ENCODE measurements at regions of chr6 and their contacts with region 1.

Region 1: GRCh38 chr6:35857853-35858252 is 52.7 kb downstream of the LHFPL5 start:
- DNase-seq: no peak
- H3K4me3 ChIP-seq: no peak overlapping the region
- H3K27ac ChIP-seq: no peak overlapping the region
- H3K4me1 ChIP-seq: no peaks in the 10 kb centered on the region
- H3K27me3 ChIP-seq: no peaks in the 10 kb centered on the region
- CTCF ChIP-seq: no peak

Region 2: DNA sequence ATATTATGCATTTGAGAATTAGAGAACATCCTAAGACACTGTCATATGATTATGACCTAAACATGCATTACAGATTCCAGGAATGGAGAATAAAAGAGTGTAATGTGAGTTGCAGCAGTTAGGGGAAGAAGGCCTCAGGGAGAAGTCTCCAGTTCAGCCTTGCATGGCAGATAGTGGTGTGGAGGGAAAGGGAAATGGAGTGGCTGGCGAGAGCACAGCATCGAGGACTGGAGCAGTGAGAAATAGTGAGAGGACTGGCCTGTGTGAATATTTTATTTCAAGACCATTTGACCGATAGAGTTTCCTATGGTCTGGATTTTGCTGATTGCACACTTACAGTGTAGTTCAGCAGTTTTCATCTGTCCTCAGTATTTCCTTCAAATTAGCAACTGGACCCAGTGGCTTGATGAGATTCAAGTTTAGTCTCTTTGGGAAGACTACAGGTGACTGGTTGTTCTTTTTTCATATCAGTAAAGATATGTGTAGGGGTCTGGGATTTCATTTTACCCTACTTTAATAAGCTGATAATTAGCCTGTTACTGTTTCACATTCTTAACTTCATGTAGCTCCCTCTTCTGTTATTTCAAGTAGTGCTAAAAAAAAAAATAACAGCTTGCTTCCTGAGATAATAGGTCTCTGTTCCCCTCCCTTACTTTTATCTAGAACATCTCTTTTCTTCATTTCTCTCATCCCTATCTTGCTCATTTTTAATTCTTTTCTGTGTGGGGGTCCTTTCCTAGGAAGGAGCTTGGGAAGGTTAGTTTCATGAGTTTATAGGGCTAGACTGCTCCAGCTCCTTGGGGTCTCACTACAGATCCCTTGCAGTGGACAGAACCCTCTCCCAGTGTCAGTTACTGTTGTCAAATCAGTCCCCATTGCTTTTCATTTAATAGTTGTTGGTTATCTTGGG is 1038.0 kb before region 1 on chr6:
- CTCF ChIA-PET with region 1: no interaction called
- dilution Hi-C with region 1: no loop called
- in situ Hi-C with region 1: no loop called
- intact Hi-C with region 1: no loop called
- DNase-seq: no peak
- H3K4me3 ChIP-seq: no peak overlapping the region
- H3K27ac ChIP-seq: no peak overlapping the region
- H3K4me1 ChIP-seq: no peaks in the 10 kb centered on the region
- H3K27me3 ChIP-seq: no peaks in the 10 kb centered on the region
- CTCF ChIP-seq: no peak

Region 3: DNA sequence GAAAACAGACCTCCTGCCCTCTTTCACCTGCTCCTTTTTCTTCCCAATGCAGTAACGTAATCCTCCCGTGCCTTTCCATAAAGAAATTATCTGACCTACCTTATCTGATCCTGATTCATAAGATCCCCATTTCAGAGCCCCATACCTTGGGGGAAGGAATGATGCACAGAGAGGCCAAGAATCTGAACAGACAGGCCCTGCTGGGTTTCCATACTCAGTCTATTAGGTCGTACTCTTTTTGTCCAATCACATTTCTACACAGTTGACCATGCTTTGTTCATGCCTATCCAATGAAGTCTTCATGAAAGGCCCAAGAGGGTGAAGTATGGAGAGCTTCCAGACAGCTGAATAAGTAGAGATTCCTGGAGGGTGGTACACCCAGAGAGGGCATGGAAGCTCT is 37.7 kb after region 1 on chr6:
- CTCF ChIA-PET with region 1: no interaction called
- dilution Hi-C with region 1: loop called (anchors 5 kb)
- in situ Hi-C with region 1: no loop called
- intact Hi-C with region 1: no loop called
- DNase-seq: peak; percentile 49
- H3K4me3 ChIP-seq: no peak overlapping the region
- H3K27ac ChIP-seq: no peak overlapping the region
- H3K4me1 ChIP-seq: peaks cover 6% of the 10 kb centered on the region
- H3K27me3 ChIP-seq: no peaks in the 10 kb centered on the region
- CTCF ChIP-seq: no peak

Measured in mammary epithelial cell (primary cell).